GM10248 (cell line): ENCODE measurements at regions of chr4 and their contacts with region 1.

Region 1: GRCh38 chr4:42646013-42646784 is 10.7 kb downstream of the ATP8A1 start:
- DNase-seq: no peak
- CTCF ChIP-seq: no peak

Region 2: DNA sequence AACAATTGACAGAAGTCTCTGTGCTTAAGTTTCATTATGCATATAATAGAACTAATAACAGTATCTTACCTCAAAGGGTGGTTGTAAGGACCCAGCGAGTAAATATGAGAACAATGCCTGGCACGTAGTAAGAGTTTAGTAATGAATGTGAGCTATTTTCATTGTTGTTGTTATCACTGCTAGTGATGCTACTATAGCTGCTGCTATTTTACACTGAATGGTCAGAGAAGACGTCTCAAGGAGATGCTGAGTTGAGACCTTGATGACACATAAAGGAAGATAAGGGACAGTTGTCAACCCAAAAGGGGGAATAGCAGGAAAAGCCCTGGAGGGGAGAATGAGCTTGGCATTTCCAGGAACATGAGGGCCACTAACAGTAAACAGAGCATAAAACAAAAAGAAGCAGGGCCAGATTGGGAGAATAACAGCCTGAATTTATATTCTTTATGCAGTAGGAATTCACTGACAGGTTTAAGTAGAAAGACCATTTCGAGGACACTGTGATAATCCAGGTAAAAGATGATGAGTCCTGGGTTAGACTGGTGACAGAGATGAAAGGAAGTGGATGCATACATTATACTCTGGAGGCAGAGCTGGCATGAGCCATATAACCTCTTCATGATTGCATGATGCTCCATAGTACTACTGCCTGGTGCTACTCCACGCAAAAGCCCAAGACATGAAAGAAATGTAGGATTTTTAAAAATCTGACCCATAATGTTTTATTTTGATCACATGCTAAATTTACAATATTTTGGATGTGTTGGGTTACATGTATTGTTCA is 12.4 kb before region 1 on chr4:
- CTCF ChIA-PET with region 1: interaction called, 35 read pairs
- POLR2A ChIA-PET with region 1: no interaction called
- DNase-seq: no peak
- CTCF ChIP-seq: no peak

Region 3: DNA sequence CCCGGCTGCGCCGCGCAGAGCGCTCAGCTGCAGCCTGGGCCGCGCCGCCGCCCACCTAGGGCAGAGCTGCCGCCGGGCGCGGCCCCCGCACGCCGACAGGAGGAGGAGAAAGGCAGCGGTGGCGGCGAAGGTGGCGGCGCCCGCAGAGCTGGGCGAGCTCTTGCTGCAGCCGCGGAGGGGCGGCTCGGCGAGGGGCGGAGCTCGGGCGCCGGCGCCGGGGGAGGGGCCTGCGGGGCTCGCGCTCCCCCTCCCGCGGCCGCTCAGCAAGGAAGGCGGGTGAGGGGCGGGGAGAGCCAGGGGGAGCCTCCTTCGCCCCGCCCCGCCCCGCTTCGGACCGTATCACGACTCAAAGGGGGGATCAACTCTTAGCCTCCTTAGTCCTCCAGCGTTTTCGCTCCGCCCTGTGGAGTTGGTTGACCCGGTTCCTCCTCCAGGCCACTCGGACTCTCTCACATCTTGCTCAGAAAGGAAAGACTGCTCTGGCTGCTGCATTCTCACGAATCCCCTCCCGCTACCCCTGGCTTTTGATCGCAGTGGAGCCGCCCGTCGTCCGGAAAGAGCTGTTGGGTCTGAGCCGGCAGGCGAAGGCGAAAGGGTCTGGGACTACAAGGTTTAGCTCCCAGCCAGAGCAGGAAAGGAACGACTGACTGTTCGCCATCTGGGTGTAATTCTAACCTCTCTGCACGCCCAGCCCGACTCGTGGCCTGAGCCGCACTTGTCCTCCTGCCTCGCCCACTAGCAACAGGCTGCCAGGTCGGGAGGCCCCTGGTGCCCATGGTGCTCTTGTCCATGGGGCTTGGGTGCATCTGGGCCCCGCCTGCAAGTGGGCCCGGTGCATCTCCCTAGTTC is 11.0 kb after region 1 on chr4 and contains the start of gene ATP8A1:
- CTCF ChIA-PET with region 1: interaction called, 24 read pairs
- POLR2A ChIA-PET with region 1: interaction called, 13 read pairs
- DNase-seq: peak; percentile 96
- CTCF ChIP-seq: no peak